PC-9 (cell line): ENCODE measurements at regions of chr4 and their contacts with region 1.

Region 1: GRCh38 chr4:48578132-48578968 is 88.3 kb downstream of the ZAR1 start:
- DNase-seq: peak in 1 of 2 experiments; percentile 37
- H3K4me3 ChIP-seq: no peak overlapping the region
- H3K27ac ChIP-seq: no peak overlapping the region
- H3K4me1 ChIP-seq: no peaks in the 10 kb centered on the region
- H3K27me3 ChIP-seq: no peaks in the 10 kb centered on the region
- CTCF ChIP-seq: peak; percentile 90

Region 2: DNA sequence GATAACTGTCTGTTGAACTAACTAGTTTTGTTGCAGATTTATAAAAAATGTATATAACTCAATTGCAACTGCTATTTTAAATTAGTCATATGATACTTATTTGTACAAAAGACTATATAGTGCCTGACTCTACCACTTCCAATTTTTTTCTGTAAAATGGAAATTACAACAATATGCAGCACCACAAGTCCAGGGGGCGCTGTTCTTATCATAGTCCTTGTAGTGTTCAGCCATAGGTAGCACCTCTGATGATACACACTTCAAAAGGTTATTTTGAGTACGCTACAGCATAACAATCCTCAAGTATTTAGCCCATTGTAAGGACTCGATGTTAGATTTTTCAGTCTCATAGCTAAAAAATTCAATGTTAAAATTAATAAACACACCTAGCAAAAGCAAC is 915.4 kb before region 1 on chr4:
- CTCF ChIA-PET with region 1: no interaction called
- POLR2A ChIA-PET with region 1: no interaction called
- intact Hi-C with region 1: no loop called
- DNase-seq: no peak
- H3K4me3 ChIP-seq: no peak overlapping the region
- H3K27ac ChIP-seq: no peak overlapping the region
- H3K4me1 ChIP-seq: no peaks in the 10 kb centered on the region
- H3K27me3 ChIP-seq: no peaks in the 10 kb centered on the region
- CTCF ChIP-seq: peak; percentile 59

Region 3: GRCh38 chr4:48681856-48682255 is 103.5 kb after region 1 on chr4:
- CTCF ChIA-PET with region 1: no interaction called
- POLR2A ChIA-PET with region 1: no interaction called
- intact Hi-C with region 1: loop called (anchors 1 kb)
- DNase-seq: peak in 1 of 2 experiments; percentile 47
- H3K4me3 ChIP-seq: no peak overlapping the region
- H3K27ac ChIP-seq: no peak overlapping the region
- H3K4me1 ChIP-seq: no peaks in the 10 kb centered on the region
- H3K27me3 ChIP-seq: no peaks in the 10 kb centered on the region
- CTCF ChIP-seq: peak; percentile 53; the same call in 1 of the 2 replicates

Region 4: GRCh38 chr4:48830706-48831531 is 252.6 kb after region 1 on chr4 and contains the start of gene OCIAD1:
- CTCF ChIA-PET with region 1: interaction called, 3 read pairs
- POLR2A ChIA-PET with region 1: no interaction called
- intact Hi-C with region 1: loop called (anchors 5 kb)
- DNase-seq: peak; percentile 94 to 96
- H3K4me3 ChIP-seq: peak within 1 kb of the TSS; percentile 92
- H3K27ac ChIP-seq: peak within 1 kb of the TSS; percentile 81
- H3K4me1 ChIP-seq: peaks cover 19% of the 10 kb centered on the region
- H3K27me3 ChIP-seq: no peaks in the 10 kb centered on the region
- CTCF ChIP-seq: no peak
- total RNA-seq, gene OCIAD1: 104 and 110 TPM in 2 replicates

Region 5: DNA sequence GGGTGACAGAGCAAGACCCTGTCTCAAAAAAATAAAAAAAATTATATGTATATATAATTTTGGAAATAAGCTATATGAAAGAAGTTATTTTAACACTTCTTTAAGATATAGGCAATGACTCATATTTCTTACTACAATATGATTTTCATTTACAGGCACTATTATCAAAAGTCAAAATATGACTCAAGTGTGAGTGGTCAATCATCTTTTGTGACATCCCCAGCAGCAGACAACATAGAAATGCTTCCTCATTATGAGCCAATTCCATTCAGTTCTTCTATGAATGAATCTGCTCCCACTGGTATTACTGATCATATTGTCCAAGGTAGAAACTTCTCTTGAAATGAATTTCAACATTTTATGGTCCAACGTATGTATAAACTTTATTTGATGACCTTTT is 273.3 kb after region 1 on chr4:
- CTCF ChIA-PET with region 1: interaction called, 3 read pairs
- POLR2A ChIA-PET with region 1: interaction called, 13 read pairs
- intact Hi-C with region 1: loop called (anchors 5 kb)
- DNase-seq: no peak
- H3K4me3 ChIP-seq: no peak overlapping the region
- H3K27ac ChIP-seq: no peak overlapping the region
- H3K4me1 ChIP-seq: no peaks in the 10 kb centered on the region
- H3K27me3 ChIP-seq: no peaks in the 10 kb centered on the region
- CTCF ChIP-seq: no peak

Region 6: DNA sequence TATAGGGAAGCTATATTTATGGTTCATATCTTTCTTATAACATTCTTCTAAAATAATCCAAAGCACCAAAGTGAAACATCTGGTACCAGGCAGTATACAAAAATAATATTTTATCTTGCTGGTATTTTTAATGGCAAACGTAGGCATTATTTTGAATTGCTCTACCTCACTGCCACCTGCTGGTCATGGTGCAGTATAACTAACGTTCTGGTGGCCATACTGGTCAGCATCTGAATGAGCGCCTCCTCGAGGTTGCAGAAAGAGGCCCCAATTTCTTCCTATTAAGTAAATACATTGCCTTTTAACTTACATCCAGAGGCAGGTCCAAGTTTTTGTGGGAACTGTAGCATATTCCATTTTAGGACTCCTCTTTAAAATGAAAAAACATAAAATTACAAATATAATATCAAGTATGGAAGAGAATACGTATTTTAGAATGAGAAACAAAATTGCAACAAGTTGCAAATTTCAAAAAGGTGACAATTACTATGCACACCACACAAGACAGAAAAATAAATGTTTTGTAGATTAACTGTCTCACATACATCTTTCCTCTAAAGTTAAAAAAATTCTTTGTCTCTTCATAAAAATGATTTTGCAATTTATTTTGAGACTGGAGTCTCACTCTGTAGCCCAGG is 384.8 kb after region 1 on chr4:
- CTCF ChIA-PET with region 1: no interaction called
- POLR2A ChIA-PET with region 1: no interaction called
- intact Hi-C with region 1: loop called (anchors 1 kb)
- DNase-seq: peak; percentile 63 to 67
- H3K4me3 ChIP-seq: no peak overlapping the region
- H3K27ac ChIP-seq: no peak overlapping the region
- H3K4me1 ChIP-seq: peaks cover 21% of the 10 kb centered on the region
- H3K27me3 ChIP-seq: no peaks in the 10 kb centered on the region
- CTCF ChIP-seq: peak; percentile 97